GM12878 (cell line): ENCODE measurements at regions of chr1 and their contacts with region 1.

Region 1: GRCh38 chr1:8525558-8526275 is 207.8 kb downstream of the SLC45A1 start:
- DNase-seq: peak; percentile 66
- ATAC-seq: peak; percentile 85
- H3K4me3 ChIP-seq: peak overlapping the region; percentile 67
- H3K27ac ChIP-seq: peak overlapping the region; percentile 67
- H3K4me1 ChIP-seq: peaks cover 23% of the 10 kb centered on the region
- H3K27me3 ChIP-seq: no peaks in the 10 kb centered on the region
- CTCF ChIP-seq: no peak
- EP300 ChIP-seq: no peak
- POLR2A ChIP-seq: no peak; the same call in 1 of the 2 replicates
- RAD21 ChIP-seq: no peak

Region 2: DNA sequence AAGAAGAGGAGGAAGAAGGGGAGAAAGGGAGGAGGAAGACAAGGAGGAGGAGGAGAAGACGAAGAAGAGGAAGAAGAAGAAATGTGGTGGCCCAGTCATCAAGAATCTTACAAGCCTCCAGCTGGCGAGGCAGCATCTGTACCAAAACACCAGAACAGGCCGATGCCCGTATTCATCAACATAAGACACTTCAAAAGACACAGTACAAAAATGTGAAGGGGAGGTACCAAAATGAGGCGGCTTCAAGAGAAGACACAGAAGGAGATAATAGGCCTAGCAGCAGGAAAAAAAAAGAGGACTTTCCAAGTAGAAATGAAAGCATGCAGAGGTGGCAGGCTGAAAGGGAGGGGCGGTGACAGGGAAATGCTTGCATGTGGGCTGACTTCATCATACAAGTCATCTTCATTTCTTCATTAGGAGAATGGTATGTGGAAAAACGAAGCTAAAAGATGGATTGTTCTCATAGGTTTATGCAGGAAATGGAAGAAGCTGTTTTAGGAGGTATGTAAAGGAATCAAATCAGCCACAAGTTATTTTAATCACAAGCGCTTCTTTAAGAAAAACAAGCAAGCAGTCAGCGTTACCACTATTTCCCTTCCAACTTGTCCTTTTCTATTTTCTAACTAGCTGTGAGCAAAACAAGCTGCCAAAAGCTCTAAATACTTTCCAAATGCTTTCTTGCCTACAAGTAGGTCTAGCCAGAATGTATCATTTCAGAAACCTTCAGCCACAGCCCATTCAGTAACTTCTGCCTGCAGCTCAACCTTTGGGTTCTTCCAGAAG is 15.5 kb before region 1 on chr1:
- CTCF ChIA-PET with region 1: interaction called, 30 read pairs
- POLR2A ChIA-PET with region 1: interaction called, 14 read pairs
- RAD21 ChIA-PET with region 1: interaction called, 4 read pairs
- SMC1A ChIA-PET with region 1: interaction called, 34 read pairs
- in situ Hi-C with region 1: no loop called
- intact Hi-C with region 1: no loop called
- DNase-seq: no peak
- ATAC-seq: peak; percentile 85
- H3K4me3 ChIP-seq: peak overlapping the region; percentile 52; the same call in 1 of the 2 replicates
- H3K27ac ChIP-seq: peak overlapping the region; percentile 60
- H3K4me1 ChIP-seq: peaks cover 16% of the 10 kb centered on the region
- H3K27me3 ChIP-seq: no peaks in the 10 kb centered on the region
- CTCF ChIP-seq: no peak
- EP300 ChIP-seq: no peak
- POLR2A ChIP-seq: no peak
- RAD21 ChIP-seq: no peak

Region 3: GRCh38 chr1:8540261-8540941 is 14.7 kb after region 1 on chr1:
- CTCF ChIA-PET with region 1: interaction called, 4 read pairs
- POLR2A ChIA-PET with region 1: no interaction called
- RAD21 ChIA-PET with region 1: interaction called, 5 read pairs
- SMC1A ChIA-PET with region 1: interaction called, 17 read pairs
- in situ Hi-C with region 1: no loop called
- intact Hi-C with region 1: no loop called
- DNase-seq: no peak
- ATAC-seq: peak; percentile 44
- H3K4me3 ChIP-seq: no peak overlapping the region
- H3K27ac ChIP-seq: no peak overlapping the region; the same call in 1 of the 2 replicates
- H3K4me1 ChIP-seq: peaks cover 17% of the 10 kb centered on the region
- H3K27me3 ChIP-seq: no peaks in the 10 kb centered on the region
- CTCF ChIP-seq: no peak
- EP300 ChIP-seq: no peak; a peak in 1 of 4 replicates
- POLR2A ChIP-seq: no peak
- RAD21 ChIP-seq: no peak